Posterior vena cava (tissue), 2 donors: ENCODE measurements at regions of chr13 and their contacts with region 1.

Region 1: GRCh38 chr13:50026788-50027473 is 11.7 kb downstream of the KCNRG start:
- DNase-seq: no peak

Region 2: DNA sequence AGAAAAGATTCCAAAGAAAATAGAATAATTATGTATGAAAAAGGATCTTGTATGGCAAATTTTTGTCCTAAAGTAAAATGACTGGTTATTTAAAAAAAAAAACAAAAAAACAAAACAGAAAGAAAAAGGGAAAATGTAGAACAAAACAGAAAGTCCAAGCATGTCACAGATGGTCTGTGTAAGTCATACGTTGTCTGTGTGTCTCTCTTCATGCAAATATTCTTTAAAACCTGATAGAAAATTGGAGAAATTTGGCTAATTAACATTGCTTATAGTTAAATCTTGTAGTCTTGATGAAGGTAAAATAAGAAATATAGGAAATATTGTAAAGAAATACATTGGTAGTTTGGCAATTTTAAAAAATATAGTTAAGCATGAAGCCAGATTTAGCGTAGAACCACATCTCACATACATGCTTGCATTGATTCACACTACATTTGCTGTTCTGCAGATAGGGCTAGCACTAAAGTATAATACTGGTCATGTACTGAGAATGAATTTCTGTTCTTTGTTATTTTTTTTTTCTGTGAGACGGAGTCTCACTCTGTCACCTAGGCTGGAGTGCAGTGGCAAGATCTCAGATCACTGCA is 149.2 kb before region 1 on chr13:
- intact Hi-C with region 1: no loop called
- DNase-seq: no peak

Region 3: DNA sequence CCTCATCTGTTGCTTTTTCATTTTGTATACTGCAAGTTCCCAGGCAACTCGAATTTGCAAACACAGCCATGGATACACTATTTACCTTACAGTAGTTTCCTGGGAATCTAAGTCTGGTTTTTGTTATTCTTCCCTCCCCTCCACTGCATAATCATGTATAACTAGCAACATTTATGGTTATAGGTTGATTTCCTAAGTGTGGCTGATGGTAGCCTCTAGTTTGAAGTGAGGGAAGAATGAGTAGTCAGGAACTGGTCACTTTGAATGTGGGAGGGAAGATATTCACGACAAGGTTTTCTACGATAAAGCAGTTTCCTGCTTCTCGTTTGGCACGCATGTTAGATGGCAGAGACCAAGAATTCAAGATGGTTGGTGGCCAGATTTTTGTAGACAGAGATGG is 11.7 kb before region 1 on chr13 and contains the start of gene KCNRG:
- intact Hi-C with region 1: loop called in 1 of 2 experiments (anchors 1 kb)
- DNase-seq: no peak
- total RNA-seq, gene KCNRG: 0.46 TPM in 1 of 2 donors, not detected in the other